ENCODE measurements at regions of chr11 and their contacts with region 1.

Region 1: GRCh38 chr11:72430741-72431570 is 3.4 kb downstream of the CLPB start:
- DNase-seq: peak; percentile 63
- H3K4me3 Mint-ChIP-seq: no peak overlapping the region
- H3K27ac Mint-ChIP-seq: peak overlapping the region; percentile 50
- H3K4me1 Mint-ChIP-seq: peaks cover 60% of the 10 kb centered on the region
- H3K27me3 Mint-ChIP-seq: no peaks in the 10 kb centered on the region

Region 2: DNA sequence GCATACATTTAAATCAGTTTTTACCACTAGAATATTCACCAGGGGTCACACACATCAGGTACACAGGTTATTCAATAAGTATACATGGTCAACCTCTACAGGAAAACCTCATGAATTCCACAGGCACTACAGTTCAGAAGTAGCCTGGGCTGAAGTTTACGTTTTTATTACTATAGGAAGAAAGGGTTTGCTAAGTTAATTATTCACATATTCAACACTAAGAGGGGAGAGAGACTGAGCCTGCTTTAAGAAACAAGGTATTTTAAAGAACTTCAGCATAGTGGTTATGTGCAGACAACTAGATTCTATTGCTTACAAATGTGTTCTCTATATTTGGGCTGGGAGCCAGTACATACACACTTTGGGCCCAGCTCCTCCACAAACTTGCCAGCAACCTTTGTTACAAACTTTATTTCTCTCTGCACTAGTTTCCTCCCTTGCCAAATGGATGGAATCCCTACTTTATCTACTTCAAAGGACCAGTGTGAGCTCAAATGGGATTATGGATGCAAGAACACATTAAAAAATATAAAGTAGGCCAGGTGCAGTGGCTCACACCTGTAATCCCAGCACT is 400.4 kb before region 1 on chr11:
- CTCF ChIA-PET with region 1: interaction called, 23 read pairs
- DNase-seq: no peak
- H3K4me3 Mint-ChIP-seq: no peak overlapping the region
- H3K27ac Mint-ChIP-seq: no peak overlapping the region
- H3K4me1 Mint-ChIP-seq: peaks cover 20% of the 10 kb centered on the region
- H3K27me3 Mint-ChIP-seq: no peaks in the 10 kb centered on the region

Region 3: DNA sequence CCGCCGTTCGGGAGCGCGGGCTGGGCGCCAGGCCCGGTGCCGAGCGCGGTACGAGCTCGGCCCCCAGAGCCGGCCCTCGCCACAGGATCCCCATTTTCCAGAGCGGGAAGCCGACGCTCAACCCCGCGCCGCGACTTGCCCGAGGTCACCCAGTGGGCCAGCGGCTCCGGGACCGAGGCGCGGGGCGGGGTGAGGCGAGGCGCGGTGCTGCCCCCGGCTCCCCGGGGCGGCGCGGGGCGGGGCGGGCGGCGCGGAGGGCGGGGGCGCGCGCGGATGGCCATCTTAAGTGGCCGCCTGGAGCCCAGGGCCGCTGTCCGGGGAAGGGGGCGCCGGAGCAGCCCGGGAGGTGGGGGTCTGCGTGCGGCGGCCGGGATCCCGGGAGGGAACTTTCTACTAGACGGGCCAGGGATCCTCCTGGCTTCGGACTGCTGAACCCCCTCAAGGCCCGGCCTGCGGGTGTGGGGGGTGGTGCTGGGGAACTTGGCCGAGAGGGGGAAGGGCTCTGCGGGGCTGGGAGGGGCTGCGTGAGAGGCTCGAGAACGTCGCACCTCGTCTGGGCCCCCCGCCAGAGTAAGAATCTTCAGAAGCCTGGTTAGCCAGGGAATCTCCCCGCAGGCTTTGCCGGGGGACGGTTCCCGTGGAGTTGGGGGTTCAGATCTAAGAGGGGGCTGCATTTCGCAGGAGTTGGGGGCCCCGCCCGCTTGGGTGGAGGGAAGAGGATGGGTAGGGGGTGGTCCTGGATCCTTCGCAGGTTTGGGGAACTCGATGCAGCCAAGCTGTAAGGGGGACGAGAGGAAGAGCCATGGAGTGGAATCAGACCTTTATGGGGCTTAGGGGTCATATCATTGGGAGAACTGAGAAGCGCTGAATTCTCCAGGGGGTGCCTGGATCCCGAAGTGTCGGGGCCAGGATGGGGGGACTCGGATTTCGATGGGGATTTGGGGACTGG is 207.1 kb before region 1 on chr11:
- CTCF ChIA-PET with region 1: interaction called, 15 read pairs
- DNase-seq: peak; percentile 77
- H3K4me3 Mint-ChIP-seq: peak overlapping the region; percentile 92
- H3K27ac Mint-ChIP-seq: peak overlapping the region; percentile 92
- H3K4me1 Mint-ChIP-seq: peaks cover 26% of the 10 kb centered on the region
- H3K27me3 Mint-ChIP-seq: peaks cover 5% of the 10 kb centered on the region

Region 4: GRCh38 chr11:72314600-72315392 is 116.2 kb before region 1 on chr11:
- CTCF ChIA-PET with region 1: interaction called, 14 read pairs
- DNase-seq: no peak
- H3K4me3 Mint-ChIP-seq: no peak overlapping the region
- H3K27ac Mint-ChIP-seq: peak overlapping the region; percentile 47
- H3K4me1 Mint-ChIP-seq: peaks cover 7% of the 10 kb centered on the region
- H3K27me3 Mint-ChIP-seq: no peaks in the 10 kb centered on the region

Region 5: DNA sequence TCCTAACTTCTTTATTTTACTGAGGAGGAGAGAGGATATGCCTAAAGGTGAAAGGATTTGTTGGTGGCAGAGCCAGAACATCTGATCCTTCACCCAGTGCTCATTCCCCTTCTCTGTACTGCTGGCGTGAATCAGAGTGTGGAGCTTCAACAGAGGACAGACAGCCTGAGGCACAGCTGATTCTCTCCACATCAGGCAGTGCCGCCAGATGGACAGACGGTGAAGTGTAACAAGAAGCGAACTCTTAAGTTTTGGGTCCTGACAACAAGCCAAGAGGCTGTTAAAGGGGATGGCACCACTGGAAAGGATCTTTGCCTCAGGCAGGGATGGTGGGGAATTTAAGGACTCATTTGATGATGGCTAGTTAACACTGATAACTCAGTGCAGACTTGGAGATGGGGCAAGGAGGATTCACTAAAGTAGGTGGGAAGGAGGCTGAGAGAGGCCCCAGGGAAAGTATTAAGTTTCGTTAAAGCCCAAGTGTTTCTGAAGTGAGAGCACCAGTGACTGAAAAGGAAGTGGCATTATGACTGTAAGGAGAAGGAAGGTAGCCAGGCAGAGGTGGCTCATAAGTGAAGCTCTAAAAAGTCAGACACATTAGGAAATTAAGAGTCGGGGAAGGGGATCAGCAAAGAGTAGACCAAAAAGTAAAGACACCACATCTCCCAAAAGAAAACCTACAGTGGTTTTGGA is 78.0 kb before region 1 on chr11:
- CTCF ChIA-PET with region 1: interaction called, 15 read pairs
- DNase-seq: no peak
- H3K4me3 Mint-ChIP-seq: no peak overlapping the region
- H3K27ac Mint-ChIP-seq: no peak overlapping the region
- H3K4me1 Mint-ChIP-seq: no peaks in the 10 kb centered on the region
- H3K27me3 Mint-ChIP-seq: no peaks in the 10 kb centered on the region

Region 6: GRCh38 chr11:72446902-72447769 is 16.2 kb after region 1 on chr11:
- CTCF ChIA-PET with region 1: interaction called, 20 read pairs
- DNase-seq: no peak
- H3K4me3 Mint-ChIP-seq: no peak overlapping the region
- H3K27ac Mint-ChIP-seq: no peak overlapping the region
- H3K4me1 Mint-ChIP-seq: peaks cover under 1% of the 10 kb centered on the region
- H3K27me3 Mint-ChIP-seq: peaks cover 23% of the 10 kb centered on the region

Region 7: DNA sequence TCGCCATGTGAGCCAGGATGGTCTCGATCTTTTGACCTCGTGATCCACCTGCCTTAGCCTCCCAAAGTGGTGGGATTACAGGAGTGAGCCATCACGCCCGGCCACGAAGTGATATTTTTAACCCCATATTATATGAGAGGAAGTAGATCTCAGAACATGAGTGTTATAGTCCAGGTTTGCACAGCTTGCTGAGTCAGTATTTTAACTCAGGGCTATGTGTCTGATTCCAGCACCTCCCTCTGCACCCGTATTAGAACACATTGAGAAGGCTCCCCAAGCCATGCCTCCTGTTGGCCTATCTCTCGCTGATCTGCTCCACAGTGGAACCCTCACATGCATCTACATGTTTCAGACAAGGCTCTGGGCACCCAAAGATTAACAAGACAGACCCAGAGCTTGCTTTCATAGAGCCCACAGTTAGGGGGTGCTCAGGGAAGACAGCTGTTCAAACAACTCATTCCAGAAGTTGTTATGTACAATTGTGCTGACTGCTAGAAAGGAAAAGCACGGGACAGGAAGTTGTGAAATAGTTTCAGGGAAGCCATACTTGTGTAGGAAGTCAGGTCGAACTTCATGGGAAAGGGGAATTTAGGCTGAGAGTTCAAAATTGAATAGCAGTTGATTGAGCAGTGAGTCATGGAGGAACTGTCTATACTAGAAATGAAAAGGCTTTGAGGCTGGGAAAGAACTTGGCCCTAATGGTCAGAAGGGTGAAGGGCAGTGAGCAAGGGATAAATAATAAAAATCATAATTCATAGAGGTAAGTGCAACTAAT is 52.6 kb after region 1 on chr11:
- CTCF ChIA-PET with region 1: no interaction called
- DNase-seq: no peak
- H3K4me3 Mint-ChIP-seq: no peak overlapping the region
- H3K27ac Mint-ChIP-seq: no peak overlapping the region
- H3K4me1 Mint-ChIP-seq: peaks cover 15% of the 10 kb centered on the region
- H3K27me3 Mint-ChIP-seq: peaks cover 9% of the 10 kb centered on the region

Measured in activated naive CD4-positive, alpha-beta T cell treated with anti-CD3 and anti-CD28 coated beads, Interleukin-2, amount 10 ng/mL, durations not matched to agents 7 days and 5 days (primary cell).